T47D (cell line): ENCODE measurements at regions of chr16 and their contacts with region 1.

Region 1: DNA sequence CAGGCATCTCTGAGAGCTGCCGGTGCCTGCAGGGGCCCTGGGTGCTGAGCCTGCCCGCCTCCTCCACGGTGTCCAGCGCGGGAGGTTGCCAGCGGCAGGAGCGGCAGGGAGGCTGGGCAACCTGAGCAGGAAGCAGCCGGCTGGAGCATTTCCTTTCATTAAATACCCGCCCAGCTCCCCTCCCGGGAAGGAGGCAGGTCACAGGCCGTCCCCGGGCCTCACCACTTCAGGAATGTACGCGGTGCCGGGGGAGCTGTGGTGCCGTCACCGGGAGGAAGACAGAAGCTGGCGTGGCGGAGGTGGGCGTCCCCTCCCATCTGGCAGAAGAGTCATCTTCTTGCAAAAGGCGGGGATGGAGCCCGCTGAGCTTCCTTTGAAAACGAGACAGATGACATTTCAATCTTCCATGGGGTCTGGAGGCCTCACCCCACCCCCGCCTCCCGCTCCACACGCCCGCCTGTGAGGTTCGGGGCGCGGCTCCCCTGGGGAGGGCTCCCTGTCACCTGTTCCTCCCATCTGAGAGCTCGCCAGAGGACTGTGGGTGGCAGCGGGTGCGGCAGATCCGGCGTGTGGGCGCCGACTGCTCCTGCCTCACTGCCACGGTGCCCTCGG is 16.0 kb downstream of the SOX8 start:
- DNase-seq: peak; percentile 52 to 74

Region 2: DNA sequence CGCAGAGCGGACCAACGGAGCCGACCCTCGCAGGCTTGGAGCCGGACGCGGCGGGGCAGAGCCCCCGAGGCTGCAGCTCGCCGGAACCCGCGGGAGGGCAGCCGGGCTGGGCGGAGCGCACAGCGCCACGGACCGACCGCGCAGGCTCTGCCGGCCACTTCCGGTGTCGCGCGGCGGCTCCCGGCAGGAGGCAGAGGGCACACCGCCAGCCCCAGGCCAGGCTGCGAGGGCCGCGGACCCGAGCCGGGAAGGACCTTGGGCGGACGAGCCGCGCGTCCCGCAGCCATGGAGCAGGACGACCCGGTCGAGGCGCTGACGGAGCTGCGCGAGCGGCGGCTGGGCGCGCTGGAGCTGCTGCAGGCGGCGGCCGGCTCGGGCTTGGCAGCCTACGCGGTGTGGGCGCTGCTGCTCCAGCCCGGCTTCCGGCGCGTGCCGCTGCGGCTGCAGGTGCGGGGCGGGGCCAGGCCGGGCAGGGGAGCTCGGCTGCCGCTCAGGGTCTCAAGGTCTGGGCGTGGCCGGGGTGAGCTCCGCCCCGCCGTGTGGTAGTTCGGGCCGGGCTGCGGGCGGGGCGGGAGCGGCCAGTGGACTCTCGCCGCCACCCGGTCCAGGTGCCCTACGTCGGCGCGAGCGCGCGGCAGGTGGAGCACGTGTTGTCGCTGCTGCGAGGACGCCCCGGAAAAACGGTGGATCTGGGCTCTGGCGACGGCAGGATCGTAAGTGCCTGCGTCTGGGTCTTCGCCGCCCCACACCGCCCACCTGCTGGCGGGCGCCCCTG is 276.4 kb before region 1 on chr16 and contains the start of gene ANTKMT:
- in situ Hi-C with region 1: loop called (anchors 25 kb)
- DNase-seq: peak; percentile 95 to 97

Region 3: GRCh38 chr16:914440-914839 is 83.1 kb before region 1 on chr16:
- in situ Hi-C with region 1: no loop called
- DNase-seq: no peak